Activated CD8-positive, alpha-beta memory T cell treated with anti-CD3 and anti-CD28 coated beads, Interleukin-2, amount 10 ng/mL, durations not matched to agents 7 days and 5 days (primary cell): ENCODE measurements at regions of chr16 and their contacts with region 1.

Region 1: DNA sequence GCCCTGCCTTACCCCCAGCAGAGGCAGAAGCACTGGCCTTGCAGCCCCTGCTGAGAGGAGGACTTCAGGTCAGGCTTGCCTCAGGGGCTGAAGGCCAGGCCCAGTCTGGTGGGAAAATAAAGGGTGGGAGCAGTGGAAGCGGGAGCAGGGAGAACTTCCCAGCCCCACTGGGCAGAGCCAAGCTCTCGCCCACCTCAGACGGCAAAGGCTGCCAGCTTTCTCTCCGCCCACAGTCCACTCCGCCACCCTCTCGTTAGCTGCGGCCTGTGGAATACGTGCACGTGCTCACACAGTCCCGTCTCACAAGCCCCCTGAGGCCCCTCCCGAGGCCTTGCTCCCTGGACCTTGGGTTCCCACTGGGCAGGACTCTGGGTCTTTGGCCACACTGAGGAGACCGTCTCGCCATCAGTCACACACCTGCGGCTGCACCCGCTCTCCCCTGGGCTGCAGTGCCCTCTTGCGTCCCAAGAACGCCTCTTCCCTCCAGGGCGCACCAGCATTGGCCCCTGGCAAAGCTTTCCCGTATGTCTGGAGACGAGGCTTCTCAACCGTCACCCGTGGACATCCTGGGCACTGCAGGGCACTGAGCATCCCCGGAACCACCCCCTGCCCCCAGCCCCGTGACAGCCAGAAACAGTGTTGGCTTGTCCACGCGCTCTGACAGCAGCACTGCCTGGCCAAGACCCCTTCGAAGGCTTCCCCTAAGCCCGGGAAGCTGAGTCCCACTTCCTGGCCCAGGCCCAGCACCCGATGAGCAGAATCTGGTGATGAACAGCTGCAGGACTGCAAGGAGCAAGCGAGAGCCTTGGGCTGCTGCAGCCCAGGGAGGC is 8.3 kb downstream of the MRPL28 start:
- DNase-seq: peak; percentile 79
- ATAC-seq: peak; percentile 92
- H3K4me3 Mint-ChIP-seq: no peak overlapping the region
- H3K27ac Mint-ChIP-seq: no peak overlapping the region
- H3K4me1 Mint-ChIP-seq: peaks cover 4% of the 10 kb centered on the region
- H3K27me3 Mint-ChIP-seq: peaks cover 5% of the 10 kb centered on the region

Region 2: DNA sequence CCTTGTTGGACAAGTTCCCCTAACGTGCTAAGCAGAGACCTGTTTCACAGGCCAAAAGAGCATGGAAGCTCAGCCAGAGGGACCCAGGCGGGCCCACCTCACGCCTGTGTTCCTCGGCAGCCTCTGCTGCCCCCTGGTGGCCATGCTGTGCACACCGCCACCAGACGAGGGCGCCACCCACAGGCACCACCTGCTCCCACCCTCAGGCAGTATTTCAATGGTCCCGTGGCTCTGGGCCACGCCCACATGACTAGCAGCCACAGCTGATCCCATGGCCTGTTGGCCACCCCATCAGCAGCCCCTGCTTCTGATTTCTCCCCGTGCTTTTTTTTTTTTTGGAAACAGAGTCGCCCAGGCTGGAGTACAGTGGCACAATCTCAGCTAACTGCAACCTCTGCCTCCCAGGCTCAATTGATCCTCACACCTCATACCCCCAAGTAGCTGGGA is 265.1 kb before region 1 on chr16:
- CTCF ChIA-PET with region 1: interaction called, 12 read pairs
- DNase-seq: peak; percentile 93
- ATAC-seq: peak; percentile 97
- H3K4me3 Mint-ChIP-seq: no peak overlapping the region
- H3K27ac Mint-ChIP-seq: peak overlapping the region; percentile 5
- H3K4me1 Mint-ChIP-seq: peaks cover 4% of the 10 kb centered on the region
- H3K27me3 Mint-ChIP-seq: no peaks in the 10 kb centered on the region

Region 3: GRCh38 chr16:117379-118365 is 244.4 kb before region 1 on chr16:
- CTCF ChIA-PET with region 1: interaction called, 10 read pairs
- DNase-seq: peak; percentile 69
- ATAC-seq: peak; percentile 80
- H3K4me3 Mint-ChIP-seq: no peak overlapping the region
- H3K27ac Mint-ChIP-seq: no peak overlapping the region
- H3K4me1 Mint-ChIP-seq: peaks cover 12% of the 10 kb centered on the region
- H3K27me3 Mint-ChIP-seq: no peaks in the 10 kb centered on the region

Region 4: GRCh38 chr16:180938-181667 is 181.0 kb before region 1 on chr16:
- CTCF ChIA-PET with region 1: interaction called, 10 read pairs
- DNase-seq: peak; percentile 85
- ATAC-seq: peak; percentile 86
- H3K4me3 Mint-ChIP-seq: no peak overlapping the region
- H3K27ac Mint-ChIP-seq: no peak overlapping the region
- H3K4me1 Mint-ChIP-seq: peaks cover 7% of the 10 kb centered on the region
- H3K27me3 Mint-ChIP-seq: peaks cover 30% of the 10 kb centered on the region

Region 5: GRCh38 chr16:188671-189070 is 173.4 kb before region 1 on chr16:
- CTCF ChIA-PET with region 1: interaction called, 10 read pairs
- DNase-seq: peak; percentile 58
- ATAC-seq: peak; percentile 72
- H3K4me3 Mint-ChIP-seq: no peak overlapping the region
- H3K27ac Mint-ChIP-seq: no peak overlapping the region
- H3K4me1 Mint-ChIP-seq: peaks cover 3% of the 10 kb centered on the region
- H3K27me3 Mint-ChIP-seq: no peaks in the 10 kb centered on the region

Region 6: DNA sequence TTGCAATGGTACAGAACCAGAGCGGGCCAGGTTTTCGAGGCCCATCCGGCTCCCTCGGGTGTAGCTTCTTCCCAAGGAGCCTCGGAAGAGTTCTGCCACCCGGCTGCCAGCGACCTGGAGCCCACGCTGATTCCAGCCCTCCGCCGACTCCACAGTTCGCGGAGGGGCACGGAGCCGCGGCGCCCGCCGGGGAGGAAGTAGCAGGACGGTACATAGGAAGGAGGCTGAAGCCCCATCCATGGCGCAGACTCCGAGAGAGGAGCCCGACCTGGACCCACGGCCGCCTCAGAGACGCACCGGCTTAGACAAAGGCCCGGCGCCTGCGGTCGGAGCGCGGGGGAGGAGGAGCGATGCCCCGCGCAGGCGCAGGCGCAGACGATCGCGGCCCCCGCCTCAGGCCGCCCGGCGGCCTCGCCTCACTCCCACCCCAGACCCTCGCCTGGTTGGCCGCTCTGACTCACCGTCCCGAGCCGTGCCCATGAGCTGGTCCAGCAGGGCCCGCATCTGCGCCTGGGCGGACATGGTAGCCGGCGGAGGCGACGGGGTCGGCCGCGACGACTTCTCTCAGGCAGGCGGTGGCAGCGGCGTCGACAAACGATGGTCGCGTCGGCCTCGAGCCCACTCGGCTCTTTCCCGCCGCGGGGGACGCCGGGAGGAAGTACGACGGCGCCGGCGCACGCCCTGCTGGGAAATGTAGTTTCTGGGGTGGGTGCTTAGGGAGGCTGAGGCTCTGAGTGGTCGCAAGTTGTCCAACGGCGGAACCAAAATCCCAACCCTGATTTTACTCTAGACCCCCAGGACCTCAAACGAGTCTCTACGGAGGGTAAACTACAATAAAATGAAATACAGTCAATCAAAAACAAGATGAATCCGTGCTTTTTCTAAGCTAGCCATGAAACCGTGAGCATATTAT is 133.0 kb before region 1 on chr16 and contains the start of gene LUC7L:
- CTCF ChIA-PET with region 1: interaction called, 12 read pairs
- DNase-seq: peak; percentile 92
- ATAC-seq: peak; percentile 93
- H3K4me3 Mint-ChIP-seq: peak within 1 kb of the TSS; percentile 81
- H3K27ac Mint-ChIP-seq: peak within 1 kb of the TSS; percentile 92
- H3K4me1 Mint-ChIP-seq: peaks cover 31% of the 10 kb centered on the region
- H3K27me3 Mint-ChIP-seq: no peaks in the 10 kb centered on the region
- total RNA-seq, gene LUC7L: 60.0 to 65.3 TPM

Region 7: GRCh38 chr16:261031-261691 is 100.9 kb before region 1 on chr16:
- CTCF ChIA-PET with region 1: no interaction called
- DNase-seq: no peak
- ATAC-seq: no peak
- H3K4me3 Mint-ChIP-seq: no peak overlapping the region
- H3K27ac Mint-ChIP-seq: no peak overlapping the region
- H3K4me1 Mint-ChIP-seq: peaks cover 5% of the 10 kb centered on the region
- H3K27me3 Mint-ChIP-seq: no peaks in the 10 kb centered on the region

Region 8: DNA sequence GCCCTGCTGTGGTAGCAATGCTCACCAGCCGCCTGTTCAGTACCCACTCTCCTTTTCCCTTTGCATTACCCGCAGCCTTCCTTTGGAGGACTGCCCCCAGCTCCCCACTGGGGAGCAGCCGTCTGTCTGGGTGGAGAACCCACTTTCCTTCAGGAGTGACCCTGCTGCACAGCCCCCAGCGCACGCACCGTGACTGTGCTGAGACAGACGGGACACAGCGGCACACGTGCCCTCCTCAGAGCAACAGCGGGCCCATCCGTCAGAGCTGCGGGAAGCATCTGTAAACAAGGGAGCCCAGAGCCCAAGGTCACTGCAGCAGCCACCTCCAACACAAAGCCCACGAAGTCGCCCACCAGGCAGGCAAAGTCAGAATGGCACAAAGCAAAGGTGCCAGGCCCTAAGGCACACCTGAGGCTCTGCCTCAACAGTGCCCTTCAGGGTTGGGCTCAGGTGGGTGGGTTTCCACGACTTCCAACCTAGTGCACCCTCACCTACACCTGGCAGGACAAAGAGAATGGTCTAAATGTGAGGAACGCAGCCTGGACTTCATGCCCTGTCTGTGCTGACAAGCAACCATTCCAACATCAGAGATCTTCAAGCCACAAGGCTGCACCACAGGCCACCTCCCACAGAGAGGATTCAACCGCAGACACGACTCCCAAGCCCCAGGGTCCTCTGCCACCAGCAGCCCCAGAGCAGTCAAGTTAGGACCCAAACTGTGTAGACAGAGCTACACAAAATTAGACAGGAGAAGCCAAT is 19.5 kb before region 1 on chr16:
- CTCF ChIA-PET with region 1: no interaction called
- DNase-seq: no peak
- ATAC-seq: no peak
- H3K4me3 Mint-ChIP-seq: no peak overlapping the region
- H3K27ac Mint-ChIP-seq: peak overlapping the region; percentile 6
- H3K4me1 Mint-ChIP-seq: peaks cover 63% of the 10 kb centered on the region
- H3K27me3 Mint-ChIP-seq: peaks cover 2% of the 10 kb centered on the region